A673 (cell line): ENCODE measurements at regions of chr10 and their contacts with region 1.

Region 1: DNA sequence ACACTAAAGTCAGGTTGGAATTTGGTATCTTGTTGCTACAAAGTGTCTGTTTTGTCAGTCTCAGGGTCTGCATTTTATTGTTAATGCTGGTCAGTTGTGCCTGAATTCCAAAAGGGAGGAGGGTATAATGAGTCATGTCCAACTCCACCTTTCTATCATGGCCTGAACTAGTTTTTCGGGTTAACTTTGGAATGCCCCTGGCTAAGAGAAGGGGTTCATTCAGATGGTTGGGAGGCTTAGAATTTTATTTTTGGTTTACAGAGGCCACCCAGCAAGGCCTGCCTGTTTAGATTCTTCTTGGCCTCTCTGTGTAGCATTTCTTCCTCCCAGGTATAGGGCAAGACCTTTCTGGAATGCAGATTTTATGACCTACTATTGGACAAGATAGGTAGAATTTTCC is 93.2 kb downstream of the SKIDA1 start:
- DNase-seq: no peak
- H3K4me3 ChIP-seq: no peak overlapping the region
- H3K27ac ChIP-seq: no peak overlapping the region
- H3K4me1 ChIP-seq: peaks cover 6% of the 10 kb centered on the region
- H3K27me3 ChIP-seq: no peaks in the 10 kb centered on the region
- CTCF ChIP-seq: no peak

Region 2: GRCh38 chr10:21413268-21413667 is 19.0 kb before region 1 on chr10:
- CTCF ChIA-PET with region 1: no interaction called
- POLR2A ChIA-PET with region 1: interaction called, 14 read pairs
- intact Hi-C with region 1: no loop called
- DNase-seq: no peak
- H3K4me3 ChIP-seq: no peak overlapping the region
- H3K27ac ChIP-seq: no peak overlapping the region
- H3K4me1 ChIP-seq: peaks cover 8% of the 10 kb centered on the region
- H3K27me3 ChIP-seq: no peaks in the 10 kb centered on the region
- CTCF ChIP-seq: no peak